Activated CD8-positive, alpha-beta T cell treated with anti-CD3 and anti-CD28 coated beads, Interleukin-2, amount 10 ng/mL, durations not matched to agents 7 days and 5 days (primary cell): ENCODE measurements at regions of chr12 and their contacts with region 1.

Region 1: DNA sequence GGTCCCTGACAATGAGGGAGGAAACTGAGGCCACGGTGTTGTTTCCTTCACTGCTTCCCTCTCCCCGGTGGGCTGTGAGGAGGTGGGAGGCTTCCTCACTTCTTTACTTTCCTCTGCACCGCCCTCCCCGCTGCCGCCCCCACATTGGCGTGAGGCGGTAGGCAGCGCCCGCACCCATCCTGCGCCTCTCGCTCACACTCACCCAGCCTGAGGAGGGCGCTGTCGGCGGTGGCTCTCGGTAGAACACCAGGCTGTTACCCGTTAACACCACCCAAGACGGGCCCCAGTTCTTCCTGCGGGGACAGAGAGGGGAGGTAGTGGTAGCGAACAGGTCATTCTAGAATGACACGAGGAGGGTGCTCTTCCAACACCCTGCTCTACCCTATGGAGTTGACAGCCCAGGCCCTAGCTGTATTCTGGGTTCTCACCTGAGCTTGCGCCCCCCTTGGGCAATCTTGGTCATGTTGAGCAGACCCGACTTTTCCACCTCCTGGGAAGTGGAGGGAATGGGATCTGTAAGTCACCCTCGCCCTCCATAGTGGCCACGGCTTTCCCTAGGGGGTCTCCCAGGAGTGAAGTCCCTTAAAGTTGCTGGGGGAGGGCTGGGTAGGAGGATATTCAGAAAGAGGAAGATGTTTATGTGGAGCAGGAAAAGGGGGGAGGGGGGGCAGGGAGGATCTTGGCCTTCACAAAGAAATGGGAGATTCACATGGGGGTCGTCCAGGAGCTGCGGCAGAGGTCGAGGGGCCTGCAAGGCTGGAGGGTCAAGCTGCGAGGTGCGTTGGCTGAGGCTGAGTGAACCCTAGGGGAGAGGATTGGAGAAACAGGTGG is 3.3 kb downstream of the ARHGAP9 start:
- DNase-seq: peak; percentile 79
- ATAC-seq: peak; percentile 13
- H3K4me3 Mint-ChIP-seq: peak overlapping the region; percentile 96
- H3K27ac Mint-ChIP-seq: peak overlapping the region; percentile 99
- H3K4me1 Mint-ChIP-seq: peaks cover 79% of the 10 kb centered on the region
- H3K27me3 Mint-ChIP-seq: no peaks in the 10 kb centered on the region

Region 2: GRCh38 chr12:57487597-57488401 is 11.4 kb after region 1 on chr12 and contains the start of gene MARS1:
- CTCF ChIA-PET with region 1: interaction called, 22 read pairs
- POLR2A ChIA-PET with region 1: interaction called, 14 read pairs
- DNase-seq: peak; percentile 96
- ATAC-seq: peak; percentile 97
- H3K4me3 Mint-ChIP-seq: peak within 1 kb of the TSS; percentile 89
- H3K27ac Mint-ChIP-seq: peak within 1 kb of the TSS; percentile 93
- H3K4me1 Mint-ChIP-seq: peaks cover 41% of the 10 kb centered on the region
- H3K27me3 Mint-ChIP-seq: no peaks in the 10 kb centered on the region
- total RNA-seq, gene MARS1: 275 to 291 TPM

Region 3: GRCh38 chr12:57498132-57498502 is 21.7 kb after region 1 on chr12:
- CTCF ChIA-PET with region 1: interaction called, 11 read pairs
- POLR2A ChIA-PET with region 1: interaction called, 10 read pairs
- DNase-seq: no peak
- ATAC-seq: no peak
- H3K4me3 Mint-ChIP-seq: no peak overlapping the region
- H3K27ac Mint-ChIP-seq: no peak overlapping the region
- H3K4me1 Mint-ChIP-seq: peaks cover 2% of the 10 kb centered on the region
- H3K27me3 Mint-ChIP-seq: no peaks in the 10 kb centered on the region